Activated CD4-positive, alpha-beta T cell treated with anti-CD3 and anti-CD28 coated beads for 36 hours (primary cell): ENCODE measurements at regions of chr4 and their contacts with region 1.

Region 1: DNA sequence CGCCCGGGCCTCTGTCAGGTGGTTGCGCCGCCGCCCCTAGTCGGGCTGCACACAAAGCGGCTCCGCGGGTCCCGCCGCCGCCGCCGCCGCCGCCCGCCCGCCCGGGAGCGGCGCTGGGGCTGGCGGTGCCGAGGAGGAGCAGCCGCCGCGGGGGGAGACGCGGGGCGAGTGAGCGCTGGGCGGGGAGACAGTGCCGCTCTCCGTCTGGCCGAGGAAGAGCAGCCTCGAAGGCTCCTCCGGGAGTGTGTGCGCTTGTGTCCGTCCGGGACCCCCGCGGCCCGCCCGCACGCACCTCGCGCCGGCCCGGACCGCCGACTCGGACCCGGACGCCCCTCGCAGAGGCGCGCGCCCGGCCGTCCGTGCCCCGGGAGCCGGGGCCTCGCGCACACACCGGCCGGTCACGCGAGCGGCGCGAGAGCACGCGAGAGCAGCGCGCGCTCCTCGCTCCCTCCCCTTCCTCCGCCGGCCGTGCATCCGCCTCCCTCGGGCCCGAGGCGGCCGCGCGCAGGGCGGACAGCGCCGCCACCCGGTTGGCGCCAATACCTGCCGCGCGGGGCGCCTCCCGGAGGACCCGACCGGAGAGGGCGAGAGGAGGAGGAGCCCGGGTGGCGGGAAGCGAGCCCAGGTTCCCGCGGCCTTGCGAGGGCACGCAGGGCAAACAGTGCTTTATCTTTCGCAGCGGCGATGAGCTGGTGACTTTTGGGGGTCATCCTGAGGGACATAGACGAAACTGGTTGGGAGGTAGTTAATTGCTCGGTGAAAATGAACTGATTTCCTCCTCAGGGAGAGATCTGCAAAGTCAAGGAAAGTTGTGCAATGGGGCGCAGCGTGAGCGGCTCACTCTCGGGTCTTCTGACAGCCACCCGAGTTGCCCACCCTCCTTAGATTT is at the start of gene PDS5A:
- DNase-seq: peak; percentile 95
- ATAC-seq: peak; percentile 90
- H3K4me3 Mint-ChIP-seq: peak within 1 kb of the TSS; percentile 80
- H3K27ac Mint-ChIP-seq: peak within 1 kb of the TSS; percentile 98
- H3K4me1 Mint-ChIP-seq: peaks cover 38% of the 10 kb centered on the region
- H3K27me3 Mint-ChIP-seq: no peaks in the 10 kb centered on the region
- total RNA-seq, gene PDS5A: 98.5 to 102 TPM

Region 2: DNA sequence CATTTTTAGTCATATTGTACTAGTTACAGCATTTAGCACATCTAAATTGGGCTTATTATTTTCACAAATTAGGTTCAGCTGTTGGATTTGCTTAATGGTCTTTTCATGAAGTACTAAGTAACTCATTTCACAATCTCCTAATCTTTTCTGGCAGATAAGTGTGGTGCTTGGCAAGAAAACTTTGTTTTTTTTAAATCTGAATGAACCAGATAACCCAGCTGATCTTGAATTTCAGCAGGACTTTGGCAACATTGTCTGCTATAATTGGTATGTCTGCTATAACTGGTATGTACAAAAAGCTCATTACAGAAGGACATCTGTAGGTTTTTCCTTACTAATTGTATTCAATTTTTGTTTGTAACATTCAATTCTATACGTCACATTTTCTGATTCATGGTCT is 772.7 kb before region 1 on chr4:
- CTCF ChIA-PET with region 1: no interaction called
- POLR2A ChIA-PET with region 1: no interaction called
- intact Hi-C with region 1: no loop called
- DNase-seq: no peak
- ATAC-seq: no peak
- H3K4me3 Mint-ChIP-seq: no peak overlapping the region
- H3K27ac Mint-ChIP-seq: no peak overlapping the region
- H3K4me1 Mint-ChIP-seq: no peaks in the 10 kb centered on the region
- H3K27me3 Mint-ChIP-seq: no peaks in the 10 kb centered on the region

Region 3: DNA sequence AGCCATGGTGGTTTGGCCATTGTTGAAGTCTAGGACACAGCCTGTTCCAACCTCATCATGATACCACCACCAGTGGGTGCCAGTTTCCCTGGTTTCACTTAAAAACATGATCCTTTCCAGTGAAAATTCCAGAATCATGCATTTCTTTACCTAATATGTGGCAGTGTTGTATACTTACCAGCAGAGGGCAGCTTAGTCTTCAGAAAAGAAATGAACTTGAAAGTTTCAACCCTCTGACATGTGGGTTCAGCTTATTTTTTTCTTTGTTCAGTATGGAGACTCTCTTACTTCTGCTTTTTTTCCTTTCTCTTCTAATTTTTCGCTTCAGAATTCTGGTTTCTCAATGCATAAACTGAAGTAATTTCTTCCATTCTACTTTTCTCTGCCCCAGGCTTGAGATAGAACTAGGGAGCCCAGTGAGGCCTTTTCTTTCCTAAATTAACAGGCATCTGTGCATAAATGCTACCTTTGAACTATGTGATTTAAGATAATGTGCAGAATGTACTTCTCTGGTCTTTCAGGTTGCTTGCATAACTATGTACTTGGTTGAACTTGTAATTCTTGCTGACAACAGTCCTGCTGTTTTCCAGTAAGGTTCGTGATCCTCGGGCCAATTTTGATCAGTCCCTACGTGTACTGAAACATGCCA is 508.2 kb before region 1 on chr4:
- CTCF ChIA-PET with region 1: interaction called, 6 read pairs
- POLR2A ChIA-PET with region 1: no interaction called
- intact Hi-C with region 1: loop called (anchors 1 to 2 kb)
- DNase-seq: peak; percentile 18
- ATAC-seq: peak; percentile 76
- H3K4me3 Mint-ChIP-seq: no peak overlapping the region
- H3K27ac Mint-ChIP-seq: peak overlapping the region; percentile 66
- H3K4me1 Mint-ChIP-seq: peaks cover 20% of the 10 kb centered on the region
- H3K27me3 Mint-ChIP-seq: no peaks in the 10 kb centered on the region

Region 4: GRCh38 chr4:39638354-39639240 is 339.1 kb before region 1 on chr4 and contains the start of gene SMIM14:
- CTCF ChIA-PET with region 1: no interaction called
- POLR2A ChIA-PET with region 1: no interaction called
- intact Hi-C with region 1: loop called in 1 of 2 experiments (anchors 1 kb)
- DNase-seq: peak; percentile 94
- ATAC-seq: peak; percentile 87
- H3K4me3 Mint-ChIP-seq: peak within 1 kb of the TSS; percentile 83
- H3K27ac Mint-ChIP-seq: peak within 1 kb of the TSS; percentile 86
- H3K4me1 Mint-ChIP-seq: peaks cover 33% of the 10 kb centered on the region
- H3K27me3 Mint-ChIP-seq: no peaks in the 10 kb centered on the region
- total RNA-seq, gene SMIM14: 1.4 to 2.0 TPM

Region 5: GRCh38 chr4:39814403-39815185 is 163.1 kb before region 1 on chr4:
- CTCF ChIA-PET with region 1: no interaction called
- POLR2A ChIA-PET with region 1: no interaction called
- intact Hi-C with region 1: loop called in 1 of 2 experiments (anchors 2 kb)
- DNase-seq: peak; percentile 37
- ATAC-seq: peak; percentile 37
- H3K4me3 Mint-ChIP-seq: peak overlapping the region; percentile 32
- H3K27ac Mint-ChIP-seq: no peak overlapping the region
- H3K4me1 Mint-ChIP-seq: peaks cover 2% of the 10 kb centered on the region
- H3K27me3 Mint-ChIP-seq: no peaks in the 10 kb centered on the region

Region 6: DNA sequence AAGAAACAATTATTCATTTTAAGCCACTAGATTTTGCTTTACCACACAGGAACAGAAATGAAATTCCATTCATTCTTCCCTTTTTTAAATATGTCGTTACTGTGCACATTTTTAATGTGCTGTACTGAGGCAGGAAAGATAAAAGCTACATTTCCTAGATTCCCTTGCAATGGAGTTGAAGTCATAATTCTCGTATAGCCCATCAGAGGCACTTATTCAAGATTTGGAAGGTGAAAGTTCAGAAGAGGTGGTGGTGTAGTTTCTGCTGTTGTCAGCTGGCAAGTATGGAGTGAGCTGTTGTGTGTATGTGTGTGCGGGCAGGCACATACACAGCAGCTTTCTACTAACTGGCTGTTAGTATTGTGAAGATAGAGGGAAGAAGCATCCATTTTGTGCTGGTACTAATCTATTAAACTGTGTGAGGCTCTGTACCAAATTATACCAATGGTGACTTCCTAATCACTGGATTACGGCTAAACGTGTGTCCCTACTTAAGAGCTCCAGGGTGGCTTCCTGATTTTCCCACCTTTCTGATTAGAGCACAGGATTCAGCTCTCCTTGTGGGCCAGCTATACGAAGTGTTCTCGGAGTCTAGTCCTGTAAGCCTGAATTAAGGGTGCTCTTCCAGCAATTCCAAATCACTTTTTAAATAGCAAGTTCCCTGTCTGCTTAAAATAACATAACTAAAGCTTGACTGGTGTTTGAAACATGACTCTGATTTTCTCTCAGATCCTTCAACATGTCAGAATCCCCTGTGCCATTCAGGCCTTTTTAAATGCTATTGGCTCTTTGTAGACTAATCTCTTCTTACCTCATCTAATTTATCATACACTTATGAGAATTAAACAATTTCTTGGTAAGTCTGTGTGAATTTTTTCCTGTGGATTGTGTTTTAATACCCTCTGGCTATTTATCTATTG is 43.8 kb before region 1 on chr4:
- CTCF ChIA-PET with region 1: interaction called, 5 read pairs
- POLR2A ChIA-PET with region 1: interaction called, 4 read pairs
- intact Hi-C with region 1: loop called (anchors 1 to 5 kb)
- DNase-seq: peak; percentile 19
- ATAC-seq: no peak
- H3K4me3 Mint-ChIP-seq: no peak overlapping the region
- H3K27ac Mint-ChIP-seq: peak overlapping the region; percentile 76
- H3K4me1 Mint-ChIP-seq: peaks cover 63% of the 10 kb centered on the region
- H3K27me3 Mint-ChIP-seq: no peaks in the 10 kb centered on the region

Region 7: DNA sequence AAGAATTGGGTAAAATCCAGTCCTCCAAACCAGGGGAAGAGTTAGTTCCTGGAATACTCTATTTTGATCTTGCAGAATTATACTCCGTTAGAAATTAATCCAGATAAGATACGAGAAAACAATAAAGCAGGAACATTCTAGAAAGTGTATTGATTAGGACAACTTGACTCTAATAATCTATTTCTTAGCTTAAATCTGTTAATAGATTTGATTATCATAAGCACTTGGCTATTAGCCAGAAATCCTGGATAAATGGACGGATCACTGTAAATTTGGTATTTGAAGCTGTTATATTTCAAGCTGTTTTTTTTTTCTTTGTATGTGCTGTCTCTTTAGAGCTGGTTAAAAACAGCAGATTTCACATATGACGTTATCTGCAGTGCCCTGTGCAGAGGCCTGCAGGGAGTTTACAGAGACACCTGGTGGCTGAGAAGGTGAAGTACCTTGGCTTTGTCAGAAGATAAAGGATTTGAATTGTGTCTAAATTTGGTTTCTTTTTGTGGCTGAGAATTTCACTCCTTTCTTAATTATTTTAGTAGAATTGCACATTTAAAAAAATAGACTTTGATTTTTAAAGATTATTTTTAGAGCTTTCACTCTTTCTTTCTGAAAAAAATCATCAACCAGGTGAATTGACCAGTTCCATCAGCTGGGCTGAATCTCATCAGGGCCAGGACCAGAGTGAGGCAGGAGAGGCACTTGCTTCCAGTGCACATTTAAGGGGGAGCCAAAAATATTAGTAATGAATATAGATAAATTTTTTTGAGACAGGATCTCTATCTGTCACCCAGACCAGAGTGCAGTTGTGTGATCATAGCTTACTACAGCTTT is 347.7 kb after region 1 on chr4:
- CTCF ChIA-PET with region 1: interaction called, 3 read pairs
- POLR2A ChIA-PET with region 1: no interaction called
- intact Hi-C with region 1: loop called in 1 of 2 experiments (anchors 2 kb)
- DNase-seq: peak; percentile 78
- ATAC-seq: peak; percentile 98
- H3K4me3 Mint-ChIP-seq: no peak overlapping the region
- H3K27ac Mint-ChIP-seq: no peak overlapping the region
- H3K4me1 Mint-ChIP-seq: peaks cover 27% of the 10 kb centered on the region
- H3K27me3 Mint-ChIP-seq: peaks cover 2% of the 10 kb centered on the region